GM18951 (cell line): ENCODE measurements at regions of chr11 and their contacts with region 1.

Region 1: GRCh38 chr11:74559934-74560309 is 32.5 kb upstream of the POLD3 start:
- POLR2A ChIP-seq: no peak

Region 2: GRCh38 chr11:74453373-74453975 is 106.4 kb before region 1 on chr11:
- in situ Hi-C with region 1: loop called (anchors 10 kb)
- POLR2A ChIP-seq: no peak

Region 3: GRCh38 chr11:74669211-74670160 is 109.6 kb after region 1 on chr11:
- in situ Hi-C with region 1: no loop called
- POLR2A ChIP-seq: no peak